BJ (cell line): ENCODE measurements at regions of chr10 and their contacts with region 1.

Region 1: GRCh38 chr10:114103284-114103683 is 59.6 kb downstream of the ADRB1 start:
- DNase-seq: peak; percentile 9
- H3K4me3 ChIP-seq: no peak overlapping the region
- H3K27me3 ChIP-seq: peaks cover 5% of the 10 kb centered on the region; the same call in 1 of the 2 replicates
- CTCF ChIP-seq: peak; percentile 54

Region 2: GRCh38 chr10:113121153-113121552 is 982.1 kb before region 1 on chr10:
- CTCF ChIA-PET with region 1: no interaction called
- POLR2A ChIA-PET with region 1: no interaction called
- DNase-seq: no peak
- H3K4me3 ChIP-seq: no peak overlapping the region
- H3K27me3 ChIP-seq: no peaks in the 10 kb centered on the region
- CTCF ChIP-seq: no peak

Region 3: GRCh38 chr10:113704637-113705343 is 398.5 kb before region 1 on chr10:
- CTCF ChIA-PET with region 1: interaction called, 10 read pairs
- POLR2A ChIA-PET with region 1: no interaction called
- DNase-seq: no peak
- H3K4me3 ChIP-seq: no peak overlapping the region
- H3K27me3 ChIP-seq: no peaks in the 10 kb centered on the region
- CTCF ChIP-seq: peak; percentile 69

Region 4: DNA sequence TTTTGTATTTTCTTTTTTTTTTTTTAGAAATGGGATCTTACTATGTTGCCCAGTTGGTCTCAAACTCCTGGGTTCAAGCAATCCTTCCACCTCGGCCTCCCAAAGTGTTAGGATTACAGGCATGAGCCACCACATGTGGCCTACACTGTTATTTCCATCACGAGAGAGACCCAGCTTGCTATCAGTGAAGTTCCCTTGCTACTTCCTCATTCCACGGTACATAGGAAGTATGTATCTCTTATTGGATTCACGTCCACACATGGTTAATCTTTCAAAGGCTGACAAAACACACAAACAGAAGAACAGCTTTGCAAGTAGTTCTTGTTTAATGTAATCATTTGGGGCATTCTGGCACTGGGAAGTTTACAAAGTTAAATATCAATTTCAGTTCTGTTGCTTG is 300.3 kb before region 1 on chr10:
- CTCF ChIA-PET with region 1: interaction called, 192 read pairs
- POLR2A ChIA-PET with region 1: no interaction called
- DNase-seq: no peak
- H3K4me3 ChIP-seq: no peak overlapping the region
- H3K27me3 ChIP-seq: peaks cover 6% of the 10 kb centered on the region; the same call in 1 of the 2 replicates
- CTCF ChIP-seq: no peak

Region 5: DNA sequence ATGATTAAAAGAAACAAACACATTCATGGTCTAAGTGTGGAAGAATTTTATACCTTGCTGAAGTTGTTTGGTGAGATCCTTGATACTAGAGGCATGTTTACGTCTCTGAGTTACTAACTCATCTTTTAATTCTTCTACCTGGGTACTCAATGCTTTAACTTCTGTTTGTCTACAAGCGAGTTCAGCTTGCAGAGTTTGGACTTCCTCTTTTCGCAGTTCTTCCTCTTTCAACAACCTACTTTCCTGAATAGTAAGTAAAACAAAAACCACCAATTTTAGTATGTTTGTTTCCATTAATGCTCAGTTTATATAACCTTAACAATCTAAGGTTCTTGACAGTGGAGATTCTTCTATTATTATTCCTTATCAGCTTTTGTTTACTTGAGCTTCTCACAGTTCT is 27.8 kb after region 1 on chr10:
- CTCF ChIA-PET with region 1: interaction called, 3 read pairs
- POLR2A ChIA-PET with region 1: interaction called, 12 read pairs
- DNase-seq: no peak
- H3K4me3 ChIP-seq: no peak overlapping the region
- H3K27me3 ChIP-seq: no peaks in the 10 kb centered on the region
- CTCF ChIP-seq: no peak